ENCODE measurements at regions of chr10 and their contacts with region 1.

Region 1: DNA sequence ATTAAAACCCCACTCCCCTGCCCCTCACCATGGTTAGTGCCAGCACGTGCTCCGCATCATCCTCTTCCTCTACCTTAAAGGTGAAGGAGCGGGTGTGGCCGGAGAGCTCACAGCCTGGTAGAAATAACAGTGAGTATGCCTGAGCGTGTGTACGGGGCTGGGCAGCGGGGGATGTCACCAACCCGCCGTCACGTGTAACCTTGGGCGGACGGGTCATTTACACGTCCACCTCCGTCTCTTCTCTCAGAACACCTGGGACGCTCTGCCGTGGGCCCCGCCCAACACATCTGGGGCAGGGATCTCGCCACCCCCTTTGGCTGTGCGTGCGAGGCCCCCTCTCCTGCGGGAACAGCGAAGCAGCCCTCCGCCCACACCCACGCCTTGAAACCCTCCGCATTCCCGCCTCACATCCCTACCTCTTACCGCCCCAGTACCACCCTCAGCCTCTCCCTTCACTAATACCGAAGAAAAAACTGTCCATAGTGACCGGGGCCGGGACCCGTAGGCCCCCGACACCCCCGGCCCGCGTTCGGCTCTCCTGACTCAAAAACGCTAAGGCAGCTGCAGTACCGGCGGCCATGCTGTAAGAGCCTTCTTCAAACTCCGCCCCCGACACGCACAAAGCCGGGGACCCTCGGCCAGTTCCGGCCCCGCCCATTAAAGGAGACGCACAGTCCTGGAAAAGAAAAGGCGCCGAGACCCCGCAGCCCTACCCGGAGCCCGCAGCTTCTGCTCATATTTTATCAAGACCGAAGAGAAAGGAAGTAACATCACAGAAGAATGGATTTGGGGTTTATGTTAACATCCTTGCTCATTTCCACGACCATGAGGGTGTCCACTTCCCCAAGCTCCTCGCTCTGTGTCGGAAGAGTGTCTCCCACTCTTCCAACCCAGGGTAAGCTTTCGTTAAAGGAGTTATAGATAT is at the start of gene NPM3:
- DNase-seq: peak; percentile 81
- H3K4me3 ChIP-seq: peak within 1 kb of the TSS; percentile 68 to 73 (median 71)
- H3K27ac ChIP-seq: peak within 1 kb of the TSS; percentile 27
- H3K4me1 ChIP-seq: peaks cover 26% of the 10 kb centered on the region
- H3K27me3 ChIP-seq: peaks cover 5 to 10% of the 10 kb centered on the region in 2 experiments
- CTCF ChIP-seq: no peak
- POLR2A ChIP-seq: peak; percentile 72
- total RNA-seq, gene NPM3: 55.4 and 60.7 TPM in 2 replicates

Region 2: DNA sequence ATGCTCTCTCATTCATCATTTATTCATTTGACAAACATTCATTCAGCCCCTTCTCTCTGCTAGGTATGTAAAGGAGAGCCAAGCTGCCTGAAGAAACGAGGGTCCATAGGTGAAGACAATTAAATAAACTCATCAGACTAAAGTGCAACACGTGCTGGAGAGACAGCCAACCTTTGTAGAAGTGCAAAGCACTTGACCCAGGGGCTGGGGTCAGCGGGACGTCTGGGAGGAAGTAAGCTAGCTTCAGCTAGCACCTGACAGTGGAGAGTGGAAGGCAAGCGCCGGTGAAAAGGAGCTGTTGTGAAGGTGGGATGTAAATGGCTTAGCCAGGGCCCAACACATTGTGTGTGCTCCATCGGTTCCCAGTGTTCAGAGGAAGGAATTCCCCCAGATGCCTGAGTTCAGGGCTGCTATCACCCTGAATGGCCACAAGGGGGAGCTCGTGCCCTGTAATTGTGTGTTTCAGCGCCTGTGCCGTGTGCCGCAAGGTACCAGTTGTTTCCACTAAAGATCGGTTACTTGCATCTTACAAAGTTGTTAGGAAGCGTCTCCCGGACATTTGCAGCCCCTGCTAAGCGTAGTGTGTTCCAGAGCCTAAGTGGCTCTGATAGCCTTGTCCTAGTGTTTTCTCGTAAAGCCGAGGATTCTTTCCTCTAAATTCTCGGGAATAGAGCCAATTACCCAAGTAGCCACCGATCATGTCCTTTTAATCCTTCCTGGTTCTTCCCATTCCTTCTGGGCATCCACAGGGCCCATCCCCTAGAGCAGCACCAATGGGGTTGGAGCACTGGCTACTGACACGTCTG is 621.4 kb before region 1 on chr10:
- CTCF ChIA-PET with region 1: interaction called, 7 read pairs
- POLR2A ChIA-PET with region 1: no interaction called
- dilution Hi-C with region 1: no loop called
- intact Hi-C with region 1: loop called (anchors 1 kb)
- DNase-seq: peak; percentile 74
- H3K4me3 ChIP-seq: no peak overlapping the region
- H3K27ac ChIP-seq: no peak overlapping the region
- H3K4me1 ChIP-seq: no peaks in the 10 kb centered on the region
- H3K27me3 ChIP-seq: peaks cover 25 to 34% of the 10 kb centered on the region in 2 experiments
- CTCF ChIP-seq: peak; percentile 94 to 98
- POLR2A ChIP-seq: no peak

Region 3: DNA sequence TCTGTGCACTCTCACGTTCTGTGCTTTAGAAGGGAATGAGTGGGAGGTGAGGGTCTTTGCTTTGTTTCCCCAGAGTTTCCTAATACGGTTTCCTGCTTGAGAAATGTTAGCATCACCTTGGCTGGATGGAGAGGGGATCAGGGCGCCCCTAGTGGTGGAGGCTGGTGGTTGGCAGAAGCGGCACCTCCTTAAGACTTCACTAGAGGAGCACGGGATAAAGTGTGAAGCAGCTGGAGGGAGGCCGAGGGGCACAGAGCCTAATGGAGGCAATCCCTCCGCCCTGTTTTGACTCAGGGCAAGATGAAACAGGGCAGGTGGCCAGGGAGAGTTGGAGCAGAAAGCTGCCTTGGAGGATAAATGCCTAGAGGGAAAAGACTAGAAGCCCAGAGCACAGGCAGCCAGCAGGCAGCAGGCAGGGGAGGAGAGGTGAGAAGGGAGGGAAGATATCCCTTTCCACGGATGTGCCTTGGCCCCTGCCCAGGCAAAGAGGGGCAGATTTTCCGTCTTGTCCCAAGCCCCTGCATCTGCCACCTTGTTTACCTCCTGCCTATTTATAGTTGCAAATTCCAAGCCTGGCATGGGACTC is 485.1 kb before region 1 on chr10:
- CTCF ChIA-PET with region 1: interaction called, 10 read pairs
- POLR2A ChIA-PET with region 1: no interaction called
- dilution Hi-C with region 1: no loop called
- intact Hi-C with region 1: no loop called
- DNase-seq: peak; percentile 65
- H3K4me3 ChIP-seq: no peak overlapping the region
- H3K27ac ChIP-seq: no peak overlapping the region
- H3K4me1 ChIP-seq: no peaks in the 10 kb centered on the region
- H3K27me3 ChIP-seq: peaks cover 17 to 37% of the 10 kb centered on the region in 2 experiments
- CTCF ChIP-seq: peak; percentile 91 to 92
- POLR2A ChIP-seq: no peak

Region 4: GRCh38 chr10:101577121-101577871 is 205.8 kb before region 1 on chr10:
- CTCF ChIA-PET with region 1: no interaction called
- POLR2A ChIA-PET with region 1: no interaction called
- dilution Hi-C with region 1: no loop called
- intact Hi-C with region 1: no loop called
- DNase-seq: no peak
- H3K4me3 ChIP-seq: no peak overlapping the region
- H3K27ac ChIP-seq: no peak overlapping the region
- H3K4me1 ChIP-seq: no peaks in the 10 kb centered on the region
- H3K27me3 ChIP-seq: no peaks in the 10 kb centered on the region
- CTCF ChIP-seq: no peak
- POLR2A ChIP-seq: peak; percentile 22

Region 5: DNA sequence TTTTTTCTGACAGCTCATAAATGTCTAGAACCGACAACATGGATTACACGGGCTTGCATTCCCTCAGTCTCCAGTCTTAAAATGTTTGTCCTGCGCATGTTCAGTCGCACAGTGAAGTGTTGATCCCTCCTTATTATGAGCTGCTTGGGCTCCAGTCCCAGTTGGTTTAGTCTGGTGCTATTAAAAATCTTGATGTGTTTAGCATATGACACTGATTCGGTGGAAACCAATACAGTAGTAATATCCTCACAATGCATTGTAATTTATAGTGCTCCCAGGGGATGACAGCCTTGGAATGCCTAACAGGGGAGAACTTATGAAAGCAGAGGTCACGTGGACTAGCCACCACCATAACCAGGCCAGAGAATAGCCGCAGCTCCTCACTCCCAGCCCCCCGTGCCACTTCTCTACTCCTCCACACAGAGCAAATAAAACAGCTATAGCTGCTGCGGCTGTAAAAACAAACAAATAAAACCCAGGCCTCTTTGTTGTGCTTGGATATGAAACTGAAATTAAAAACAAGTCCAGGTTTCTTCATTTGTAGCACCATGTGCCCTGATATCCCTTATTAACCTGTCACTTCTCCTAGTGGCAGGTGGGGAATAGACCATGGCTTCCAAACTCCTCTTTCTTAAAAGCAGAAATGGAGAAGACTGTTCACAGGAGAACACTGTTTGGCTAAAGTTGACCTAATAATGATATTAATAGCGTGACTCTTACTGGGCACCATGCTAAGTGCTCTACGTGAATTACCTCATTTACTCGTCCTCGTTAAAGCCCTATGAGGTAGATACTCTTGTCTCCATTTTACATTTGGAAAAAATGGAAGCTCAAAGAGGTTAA is 187.3 kb before region 1 on chr10:
- CTCF ChIA-PET with region 1: interaction called, 193 read pairs
- POLR2A ChIA-PET with region 1: no interaction called
- dilution Hi-C with region 1: no loop called
- intact Hi-C with region 1: no loop called
- DNase-seq: no peak
- H3K4me3 ChIP-seq: no peak overlapping the region
- H3K27ac ChIP-seq: no peak overlapping the region
- H3K4me1 ChIP-seq: no peaks in the 10 kb centered on the region
- H3K27me3 ChIP-seq: no peaks in the 10 kb centered on the region
- CTCF ChIP-seq: no peak
- POLR2A ChIP-seq: no peak

Region 6: DNA sequence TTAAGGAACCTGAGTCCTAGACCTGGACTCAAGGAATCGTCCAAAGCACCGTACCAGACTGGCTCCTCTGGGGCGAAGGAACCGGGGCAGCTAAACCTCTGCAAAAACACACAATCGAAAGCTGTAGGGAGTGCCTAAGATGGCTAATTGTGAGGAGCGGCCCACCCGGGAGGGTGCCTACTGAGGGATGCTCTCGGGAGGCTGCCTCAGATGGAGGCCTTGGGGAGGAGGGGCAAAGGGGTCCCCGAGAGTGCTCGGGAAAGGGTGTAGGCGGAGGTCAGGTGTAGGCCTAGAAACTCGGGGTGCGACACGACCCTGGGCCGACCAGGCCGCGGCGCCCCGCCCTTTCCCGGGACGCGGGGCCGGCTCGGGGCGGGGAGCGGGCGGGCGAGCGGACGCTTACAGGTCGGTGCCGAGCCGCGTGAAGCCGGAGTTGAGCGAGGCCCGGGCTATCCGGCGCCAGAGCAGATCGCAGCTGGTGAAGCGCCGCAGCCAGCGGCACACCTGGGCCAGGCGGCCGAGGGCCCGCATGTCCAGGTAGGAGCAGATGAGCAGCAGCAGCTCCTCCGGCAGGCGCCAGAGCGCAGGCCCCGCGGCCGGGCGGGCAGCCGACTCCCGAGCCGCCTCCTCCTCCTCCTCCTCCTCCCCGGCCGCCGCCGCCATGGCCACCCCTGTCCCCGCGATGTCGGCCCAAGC is 88.9 kb before region 1 on chr10:
- CTCF ChIA-PET with region 1: interaction called, 5 read pairs
- POLR2A ChIA-PET with region 1: no interaction called
- dilution Hi-C with region 1: no loop called
- intact Hi-C with region 1: loop called (anchors 5 kb)
- DNase-seq: peak; percentile 68
- H3K4me3 ChIP-seq: peak overlapping the region; percentile 52 to 95 (median 77)
- H3K27ac ChIP-seq: peak overlapping the region; percentile 82
- H3K4me1 ChIP-seq: peaks cover 14% of the 10 kb centered on the region
- H3K27me3 ChIP-seq: no peaks in the 10 kb centered on the region
- CTCF ChIP-seq: no peak
- POLR2A ChIP-seq: peak; percentile 87

Region 7: DNA sequence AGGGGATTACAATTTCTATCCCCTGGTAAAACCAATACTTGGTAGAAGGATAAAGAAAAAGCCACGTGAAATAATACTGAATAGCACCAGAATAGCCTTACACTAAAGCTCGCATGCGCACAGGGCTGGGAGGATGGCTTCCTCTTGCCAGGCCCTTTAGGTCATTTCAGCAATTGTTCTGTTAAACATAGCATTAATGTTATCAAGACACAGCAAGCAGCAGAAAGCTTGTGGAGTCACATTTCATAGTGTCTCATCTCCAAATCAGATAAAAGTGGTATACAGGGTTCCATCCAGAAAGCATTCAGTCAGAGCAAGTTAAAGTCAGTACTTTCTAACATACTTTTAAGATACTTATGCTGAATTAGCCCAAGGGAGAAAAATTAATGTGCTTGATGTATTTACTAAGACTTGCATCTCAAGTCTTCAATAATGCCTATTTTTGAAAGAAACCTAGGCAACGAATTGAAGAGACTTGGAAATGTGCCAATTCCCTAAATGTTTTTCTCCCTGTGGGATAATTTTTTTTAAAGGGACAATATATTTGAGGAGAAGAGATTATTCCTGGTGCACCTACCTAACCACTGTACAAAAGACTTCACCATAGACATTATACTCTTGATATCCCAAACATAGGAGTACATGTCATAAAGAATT is 14.5 kb after region 1 on chr10:
- CTCF ChIA-PET with region 1: interaction called, 16 read pairs
- POLR2A ChIA-PET with region 1: no interaction called
- dilution Hi-C with region 1: no loop called
- intact Hi-C with region 1: no loop called
- DNase-seq: no peak
- H3K4me3 ChIP-seq: no peak overlapping the region
- H3K27ac ChIP-seq: no peak overlapping the region
- H3K4me1 ChIP-seq: no peaks in the 10 kb centered on the region
- H3K27me3 ChIP-seq: no peaks in the 10 kb centered on the region
- CTCF ChIP-seq: no peak
- POLR2A ChIP-seq: no peak

Region 8: DNA sequence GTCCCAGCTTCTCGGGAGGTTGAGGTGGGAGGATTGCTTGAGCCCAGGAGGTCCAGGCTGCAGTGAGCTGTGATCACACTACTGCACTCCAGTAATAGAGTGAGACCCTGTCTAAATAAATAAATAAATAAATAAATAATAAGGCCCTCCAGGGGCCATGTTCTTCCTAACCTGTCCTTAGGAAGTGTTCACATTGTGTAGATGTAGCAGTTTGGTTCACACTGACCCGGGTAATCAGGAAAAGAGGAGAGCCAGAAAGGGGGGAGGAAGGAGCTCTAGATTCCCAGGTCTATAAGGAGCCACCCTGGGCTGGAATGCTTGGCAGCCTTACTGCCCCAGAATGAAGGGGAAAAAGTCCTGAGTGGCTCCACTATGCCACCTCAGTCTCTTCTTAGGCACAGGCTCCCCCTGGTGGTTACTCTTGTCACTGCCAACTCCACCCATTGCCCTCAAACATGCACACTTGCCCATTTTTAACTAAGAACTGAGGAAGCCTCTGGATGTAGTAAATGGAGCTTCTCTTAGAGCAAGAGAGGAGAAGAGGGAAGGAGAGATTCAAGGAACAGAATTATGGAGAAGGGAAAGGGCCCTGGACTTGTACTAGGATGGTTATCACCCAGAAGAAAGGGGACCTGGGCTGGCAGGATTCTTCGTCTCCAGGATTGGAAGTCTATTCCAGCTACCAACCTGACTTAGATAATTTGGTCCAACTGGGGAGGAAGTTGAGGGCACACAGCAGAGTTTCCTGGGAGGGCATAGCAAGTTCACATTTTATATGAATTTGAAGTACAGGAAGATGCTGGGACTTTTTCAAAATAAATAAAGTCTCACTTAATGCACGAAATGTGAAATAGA is 289.8 kb after region 1 on chr10:
- CTCF ChIA-PET with region 1: interaction called, 7 read pairs
- POLR2A ChIA-PET with region 1: no interaction called
- dilution Hi-C with region 1: no loop called
- intact Hi-C with region 1: loop called (anchors 1 kb)
- DNase-seq: peak; percentile 81
- H3K4me3 ChIP-seq: no peak overlapping the region
- H3K27ac ChIP-seq: no peak overlapping the region
- H3K4me1 ChIP-seq: no peaks in the 10 kb centered on the region
- H3K27me3 ChIP-seq: peaks cover 0 to 2% of the 10 kb centered on the region in 2 experiments
- CTCF ChIP-seq: peak; percentile 91 to 98
- POLR2A ChIP-seq: no peak

Region 9: DNA sequence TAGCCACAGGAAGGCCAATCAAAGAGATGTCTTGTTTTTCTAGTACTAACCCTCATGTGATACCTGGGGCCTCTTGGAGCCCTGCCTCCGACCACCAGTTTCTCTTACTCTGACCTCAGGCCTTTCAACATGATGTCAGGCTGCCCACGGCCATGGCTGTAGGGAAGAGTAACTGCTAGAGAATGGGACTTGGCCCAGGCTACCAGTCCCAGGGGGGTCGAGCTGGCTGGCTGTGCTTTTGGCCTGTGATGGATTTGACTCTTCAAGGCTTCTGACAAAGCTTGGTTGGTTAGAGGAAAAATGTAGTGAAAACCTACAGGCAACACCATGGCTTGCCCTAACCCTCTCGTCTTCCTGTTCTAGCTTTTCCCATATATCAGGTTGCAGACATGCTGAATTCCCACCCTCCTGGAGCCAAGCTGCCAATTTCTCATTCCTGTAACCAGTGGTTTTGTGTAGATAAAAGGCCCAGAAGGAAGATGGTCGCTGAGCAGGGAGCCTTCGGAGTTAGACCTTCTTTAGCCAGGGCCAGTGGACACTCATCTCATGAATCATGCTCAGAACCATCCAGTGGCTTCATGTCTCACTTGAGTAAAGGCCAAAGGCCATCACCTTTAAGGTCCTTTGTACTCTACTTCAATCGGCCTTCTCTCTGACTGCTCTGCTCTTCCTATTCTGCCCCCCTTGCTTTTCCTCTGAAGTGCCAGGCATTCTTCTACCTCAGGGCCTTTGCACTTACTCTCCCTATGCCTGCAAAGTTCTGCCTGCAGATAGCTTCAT is 740.4 kb after region 1 on chr10:
- CTCF ChIA-PET with region 1: no interaction called
- POLR2A ChIA-PET with region 1: no interaction called
- dilution Hi-C with region 1: no loop called
- intact Hi-C with region 1: no loop called
- DNase-seq: no peak
- H3K4me3 ChIP-seq: no peak overlapping the region
- H3K27ac ChIP-seq: no peak overlapping the region
- H3K4me1 ChIP-seq: no peaks in the 10 kb centered on the region
- H3K27me3 ChIP-seq: no peaks in the 10 kb centered on the region
- CTCF ChIP-seq: no peak
- POLR2A ChIP-seq: no peak